Naive thymus-derived CD4-positive, alpha-beta T cell (primary cell): ENCODE measurements at regions of chr16 and their contacts with region 1.

Region 1: DNA sequence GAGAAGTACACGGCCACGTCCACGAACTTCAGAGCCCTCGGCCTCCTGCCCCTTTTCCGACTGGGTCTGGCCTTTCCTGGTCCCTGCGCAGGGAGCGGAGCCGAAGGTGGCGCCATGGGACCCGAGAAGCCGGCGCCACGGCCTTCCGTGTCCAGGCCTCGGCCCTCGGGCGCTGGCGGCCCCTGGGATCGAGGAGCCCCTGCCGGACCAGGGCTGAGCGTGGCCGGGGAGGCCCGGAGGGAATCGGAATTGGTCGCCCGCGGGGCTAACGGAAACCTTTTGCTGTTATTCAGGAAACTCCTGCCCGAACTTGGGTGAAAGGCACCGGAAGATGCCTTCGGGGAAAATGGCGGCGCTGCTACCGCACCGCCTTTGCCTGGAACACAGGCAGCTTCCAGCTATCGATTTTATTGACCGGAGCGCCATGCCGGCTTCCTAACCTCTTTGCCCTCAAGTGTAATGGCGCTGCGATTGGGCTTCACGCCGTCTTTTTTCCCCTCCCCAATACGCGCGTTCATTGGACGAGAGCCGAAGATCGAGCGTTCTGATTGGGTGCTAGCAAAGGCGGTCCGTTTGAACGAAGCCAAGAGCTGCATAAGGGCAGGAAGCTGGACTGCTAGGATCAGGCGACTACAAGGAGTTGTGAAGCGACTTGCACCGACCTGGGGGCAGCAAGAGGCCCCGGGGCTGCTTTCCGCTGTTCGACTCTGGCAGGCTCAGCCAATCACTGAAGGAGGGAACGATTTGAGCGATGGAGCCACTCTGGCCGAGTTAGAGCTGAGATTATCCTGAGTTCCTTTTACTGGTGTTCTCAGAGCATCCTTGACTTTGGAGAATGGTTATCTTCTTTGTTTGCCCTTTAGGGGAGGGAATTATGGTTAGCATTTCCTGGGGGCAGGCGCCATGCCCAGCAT is at the start of gene ZNF689:
- DNase-seq: peak; percentile 90 to 98 (median 93)
- ATAC-seq: peak; percentile 96
- H3K4me3 ChIP-seq: peak within 1 kb of the TSS; percentile 98
- H3K4me3 Mint-ChIP-seq: peak within 1 kb of the TSS; percentile 89 to 97 (median 94)
- H3K27ac ChIP-seq: peak within 1 kb of the TSS; percentile 94
- H3K27ac Mint-ChIP-seq: peak within 1 kb of the TSS; percentile 94 to 99 (median 97)
- H3K4me1 ChIP-seq: peaks cover 8 to 11% of the 10 kb centered on the region in 2 donors
- H3K4me1 Mint-ChIP-seq: peaks cover 5 to 26% (median 22%) of the 10 kb centered on the region in 7 donors
- H3K27me3 ChIP-seq: no peaks in the 10 kb centered on the region
- H3K27me3 Mint-ChIP-seq: no peaks in the 10 kb centered on the region
- total RNA-seq, gene ZNF689: 6.8 to 14.6 (median 12.4) TPM

Region 2: GRCh38 chr16:30585400-30586189 is 24.6 kb before region 1 on chr16 and contains the start of gene ZNF785:
- CTCF ChIA-PET with region 1: no interaction called
- POLR2A ChIA-PET with region 1: interaction called, 8 read pairs
- intact Hi-C with region 1: loop called (anchors 1 kb)
- DNase-seq: peak; percentile 72 to 95 (median 93)
- ATAC-seq: peak; percentile 100
- H3K4me3 ChIP-seq: peak within 1 kb of the TSS; percentile 77
- H3K4me3 Mint-ChIP-seq: peak within 1 kb of the TSS; percentile 85 to 98 (median 94)
- H3K27ac ChIP-seq: peak within 1 kb of the TSS; percentile 81
- H3K27ac Mint-ChIP-seq: peak within 1 kb of the TSS; percentile 89 to 95 (median 92)
- H3K4me1 ChIP-seq: peaks cover 8 to 12% of the 10 kb centered on the region in 2 donors
- H3K4me1 Mint-ChIP-seq: peaks cover 6 to 44% (median 32%) of the 10 kb centered on the region in 7 donors
- H3K27me3 ChIP-seq: no peaks in the 10 kb centered on the region
- H3K27me3 Mint-ChIP-seq: peaks cover 0 to 2% (median 0%) of the 10 kb centered on the region in 5 donors
- total RNA-seq, gene ZNF785: 10.2 to 37.1 (median 21.4) TPM

Region 3: GRCh38 chr16:30692381-30693064 is 82.3 kb after region 1 on chr16:
- CTCF ChIA-PET with region 1: interaction called, 3 read pairs
- POLR2A ChIA-PET with region 1: interaction called, 4 read pairs
- intact Hi-C with region 1: loop called in 1 of 2 experiments (anchors 1 kb)
- DNase-seq: no peak
- ATAC-seq: no peak
- H3K4me3 ChIP-seq: no peak overlapping the region
- H3K4me3 Mint-ChIP-seq: no peak overlapping the region
- H3K27ac ChIP-seq: no peak overlapping the region
- H3K27ac Mint-ChIP-seq: peak overlapping the region in 2 of 9 donors; percentile 2 to 20
- H3K4me1 ChIP-seq: peaks cover 3 to 16% of the 10 kb centered on the region in 2 donors
- H3K4me1 Mint-ChIP-seq: peaks cover 15 to 27% (median 21%) of the 10 kb centered on the region in 7 donors
- H3K27me3 ChIP-seq: no peaks in the 10 kb centered on the region
- H3K27me3 Mint-ChIP-seq: no peaks in the 10 kb centered on the region